ENCODE measurements at regions of chr1 and their contacts with region 1.

Region 1: DNA sequence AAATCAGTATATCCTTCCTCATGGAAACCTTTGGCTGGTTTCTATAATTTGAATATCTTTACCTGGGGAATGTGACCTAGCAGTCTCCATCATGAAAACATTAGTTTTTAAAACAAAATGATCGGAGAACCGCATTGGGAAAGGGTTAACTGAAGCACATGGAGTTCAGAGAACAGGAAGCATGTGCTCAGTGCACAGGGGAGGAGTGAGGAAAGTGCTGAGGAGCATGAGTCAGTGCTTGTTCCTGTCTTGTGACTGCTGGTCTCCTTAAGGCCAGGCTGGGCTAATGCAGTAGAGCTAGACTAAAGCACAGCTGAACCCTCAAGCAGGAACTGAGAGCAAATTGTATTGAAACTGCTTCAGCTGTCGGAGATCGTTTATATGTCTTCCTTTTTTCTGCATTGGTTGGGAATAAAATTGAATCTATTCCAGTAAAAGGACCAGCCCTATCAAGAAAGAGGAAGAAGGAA is 5.8 kb downstream of the IFI16 start:
- DNase-seq: peak; percentile 84
- ATAC-seq: peak; percentile 83
- H3K4me3 ChIP-seq: peak overlapping the region; percentile 64
- H3K27ac ChIP-seq: peak overlapping the region; percentile 100
- H3K4me1 ChIP-seq: peaks cover 7% of the 10 kb centered on the region
- H3K27me3 ChIP-seq: no peaks in the 10 kb centered on the region
- CTCF ChIP-seq: no peak
- EP300 ChIP-seq: no peak
- POLR2A ChIP-seq: peak; percentile 81
- RAD21 ChIP-seq: no peak

Region 2: DNA sequence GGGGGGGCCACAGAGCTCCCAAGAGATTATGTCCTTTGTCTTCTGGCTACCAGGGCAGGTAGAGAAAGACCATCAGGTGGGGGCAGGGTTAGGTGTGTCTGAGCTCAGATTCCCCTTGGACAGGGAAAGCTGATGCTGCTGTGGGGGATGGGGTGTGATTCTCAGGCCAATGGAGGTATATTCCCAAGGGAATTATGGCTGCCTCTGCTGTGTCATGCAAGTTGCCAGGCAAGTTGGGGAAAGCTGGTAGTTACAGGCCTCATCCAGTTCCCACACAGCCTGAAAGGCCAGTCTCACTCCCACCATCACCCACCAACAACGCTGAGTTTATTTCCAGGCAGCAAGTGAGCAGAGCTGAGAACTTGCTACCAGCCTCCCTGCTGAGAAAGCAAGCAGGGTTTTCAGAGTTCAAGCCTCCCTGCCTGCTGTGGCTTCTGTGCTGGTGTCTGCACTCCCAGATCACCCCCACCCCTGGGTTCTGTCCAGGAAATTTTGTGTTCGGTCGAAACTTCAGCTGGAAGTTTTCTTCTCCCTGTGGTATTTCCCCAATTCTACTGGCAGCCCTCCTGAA is 15.5 kb after region 1 on chr1:
- CTCF ChIA-PET with region 1: interaction called, 6 read pairs
- POLR2A ChIA-PET with region 1: interaction called, 11 read pairs
- RAD21 ChIA-PET with region 1: no interaction called
- SMC1A ChIA-PET with region 1: interaction called, 7 read pairs
- in situ Hi-C with region 1: no loop called
- intact Hi-C with region 1: no loop called
- DNase-seq: no peak
- ATAC-seq: no peak; the same call in 2 of the 3 replicates
- H3K4me3 ChIP-seq: no peak overlapping the region
- H3K27ac ChIP-seq: no peak overlapping the region
- H3K4me1 ChIP-seq: no peaks in the 10 kb centered on the region
- H3K27me3 ChIP-seq: no peaks in the 10 kb centered on the region
- CTCF ChIP-seq: no peak
- EP300 ChIP-seq: no peak
- POLR2A ChIP-seq: no peak
- RAD21 ChIP-seq: no peak

Measured in GM12878 (cell line).